Activated T-helper 2 cell treated with anti-CD3 and anti-CD28 coated beads, Interferon-gamma antibody, Interleukin-2, Interleukin-4, amounts not matched to agents 10 μg/mL and 5 μg/mL and 100 μg/mL, durations not matched to agents 14 hours and 24 hours and 36 hours (primary cell): ENCODE measurements at regions of chr9 and their contacts with region 1.

Region 1: DNA sequence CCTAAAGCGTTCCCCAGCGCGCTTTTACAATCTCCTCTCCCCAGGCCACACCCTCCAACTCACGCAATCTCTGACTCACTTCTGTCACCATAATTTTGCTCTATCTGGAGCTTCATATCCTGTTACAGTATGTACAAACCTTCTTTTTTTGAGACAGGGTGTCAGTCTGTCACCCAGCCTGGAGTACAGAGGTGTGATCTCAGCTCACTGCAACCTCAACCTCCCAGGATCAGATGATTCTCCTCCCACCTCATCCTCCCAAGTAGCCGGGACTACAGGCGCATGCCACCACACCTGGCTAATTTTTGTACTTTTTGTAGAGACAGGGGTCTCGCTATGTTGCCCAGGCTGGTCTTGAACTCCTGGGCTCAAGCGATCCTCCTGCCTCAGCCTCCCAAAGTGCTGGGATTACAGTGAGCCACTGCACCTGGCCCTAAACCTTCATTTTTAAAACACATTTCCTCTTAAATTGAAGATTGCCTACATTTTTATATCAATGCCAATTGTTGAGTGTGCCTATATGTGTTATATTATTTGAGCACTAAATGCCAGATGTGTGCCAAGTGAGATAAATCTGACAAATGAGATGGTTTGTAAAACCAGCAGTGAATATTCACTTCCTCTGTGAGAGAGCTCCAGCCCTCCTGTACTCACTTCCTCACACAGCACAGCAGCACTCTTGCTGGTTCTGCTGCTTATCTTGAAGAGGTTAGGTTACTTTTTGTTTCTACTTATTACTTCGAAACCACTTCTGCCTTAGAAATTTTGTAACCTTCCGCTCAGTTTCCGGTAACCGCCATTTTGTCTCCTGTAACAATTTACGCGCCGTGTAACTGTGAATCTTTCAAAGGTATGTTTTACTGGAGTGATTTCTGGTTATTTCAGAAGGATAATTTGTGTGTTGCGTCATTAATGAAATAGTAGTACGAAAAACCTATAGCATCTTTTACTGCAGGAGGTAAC is 57.9 kb downstream of the DOCK8 start:
- DNase-seq: peak; percentile 74
- H3K4me3 Mint-ChIP-seq: peak overlapping the region; percentile 88
- H3K27ac Mint-ChIP-seq: peak overlapping the region; percentile 98
- H3K4me1 Mint-ChIP-seq: peaks cover 53% of the 10 kb centered on the region
- H3K27me3 Mint-ChIP-seq: no peaks in the 10 kb centered on the region

Region 2: GRCh38 chr9:206481-206880 is 66.1 kb before region 1 on chr9:
- intact Hi-C with region 1: no loop called
- DNase-seq: no peak
- H3K4me3 Mint-ChIP-seq: no peak overlapping the region
- H3K27ac Mint-ChIP-seq: no peak overlapping the region
- H3K4me1 Mint-ChIP-seq: no peaks in the 10 kb centered on the region
- H3K27me3 Mint-ChIP-seq: peaks cover 32% of the 10 kb centered on the region

Region 3: GRCh38 chr9:237858-238345 is 34.6 kb before region 1 on chr9:
- intact Hi-C with region 1: loop called (anchors 2 kb)
- DNase-seq: no peak
- H3K4me3 Mint-ChIP-seq: peak overlapping the region; percentile 51
- H3K27ac Mint-ChIP-seq: peak overlapping the region; percentile 28
- H3K4me1 Mint-ChIP-seq: peaks cover 45% of the 10 kb centered on the region
- H3K27me3 Mint-ChIP-seq: peaks cover 2% of the 10 kb centered on the region

Region 4: GRCh38 chr9:249025-249424 is 23.5 kb before region 1 on chr9:
- intact Hi-C with region 1: loop called (anchors 1 kb)
- DNase-seq: peak; percentile 16
- H3K4me3 Mint-ChIP-seq: peak overlapping the region; percentile 37
- H3K27ac Mint-ChIP-seq: peak overlapping the region; percentile 62
- H3K4me1 Mint-ChIP-seq: peaks cover 33% of the 10 kb centered on the region
- H3K27me3 Mint-ChIP-seq: peaks cover 3% of the 10 kb centered on the region